CD8-positive, alpha-beta memory T cell (primary cell): ENCODE measurements at regions of chr10 and their contacts with region 1.

Region 1: DNA sequence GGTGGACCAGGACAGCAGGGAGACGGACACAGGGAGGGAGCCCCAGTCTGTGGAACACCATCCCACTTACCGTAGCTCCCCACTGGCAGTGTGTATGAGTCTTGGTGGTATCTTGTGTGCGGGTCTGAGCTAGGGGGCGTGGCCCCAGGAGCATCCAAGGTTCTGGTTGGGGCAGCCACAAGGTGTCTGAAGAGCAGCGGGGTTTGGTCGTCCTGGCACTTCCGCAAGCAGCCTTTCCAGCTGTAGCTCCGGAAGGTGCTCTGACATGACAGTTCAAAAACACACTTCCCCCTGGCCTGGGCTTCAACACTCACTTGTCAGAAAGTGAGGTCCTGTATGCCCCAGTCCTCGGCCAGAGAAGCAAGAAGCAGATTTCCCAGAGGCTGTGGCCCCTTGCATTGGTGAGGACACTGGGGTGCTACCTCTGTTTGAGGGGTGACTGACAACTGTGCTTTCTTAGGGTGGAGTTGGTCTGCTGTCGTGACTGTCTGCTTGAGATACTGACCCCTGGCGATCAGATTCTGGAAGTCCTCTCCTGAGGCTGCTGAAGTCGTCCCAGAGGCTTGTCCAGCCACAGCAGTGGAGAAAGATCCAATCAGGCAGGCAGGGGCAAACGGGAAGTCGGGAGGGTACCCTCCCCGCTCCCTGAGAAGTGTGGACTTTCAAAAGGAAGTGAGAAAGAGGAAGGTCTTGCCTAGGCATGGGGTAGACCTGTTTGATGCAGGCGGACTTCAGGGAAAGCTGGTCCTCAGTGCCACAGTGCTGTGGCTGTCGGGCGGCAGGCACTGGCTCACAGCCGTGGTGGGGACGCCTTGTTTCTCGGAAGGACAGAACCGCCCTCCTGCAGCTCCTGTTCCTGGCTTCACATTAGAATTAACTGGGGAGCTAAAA is 51.4 kb upstream of the PFKFB3 start:
- DNase-seq: peak in 4 of 5 donors; percentile 26 to 59 (median 50)
- H3K4me3 ChIP-seq: peak overlapping the region; percentile 34
- H3K4me3 Mint-ChIP-seq: peak overlapping the region in 6 of 7 donors; percentile 43 to 75 (median 48)
- H3K27ac ChIP-seq: no peak overlapping the region
- H3K27ac Mint-ChIP-seq: peak overlapping the region in 7 of 8 donors; percentile 13 to 89 (median 73)
- H3K4me1 ChIP-seq: peaks cover 25% of the 10 kb centered on the region
- H3K4me1 Mint-ChIP-seq: peaks cover 43 to 60% (median 44%) of the 10 kb centered on the region in 3 donors
- H3K27me3 ChIP-seq: no peaks in the 10 kb centered on the region
- H3K27me3 Mint-ChIP-seq: no peaks in the 10 kb centered on the region

Region 2: DNA sequence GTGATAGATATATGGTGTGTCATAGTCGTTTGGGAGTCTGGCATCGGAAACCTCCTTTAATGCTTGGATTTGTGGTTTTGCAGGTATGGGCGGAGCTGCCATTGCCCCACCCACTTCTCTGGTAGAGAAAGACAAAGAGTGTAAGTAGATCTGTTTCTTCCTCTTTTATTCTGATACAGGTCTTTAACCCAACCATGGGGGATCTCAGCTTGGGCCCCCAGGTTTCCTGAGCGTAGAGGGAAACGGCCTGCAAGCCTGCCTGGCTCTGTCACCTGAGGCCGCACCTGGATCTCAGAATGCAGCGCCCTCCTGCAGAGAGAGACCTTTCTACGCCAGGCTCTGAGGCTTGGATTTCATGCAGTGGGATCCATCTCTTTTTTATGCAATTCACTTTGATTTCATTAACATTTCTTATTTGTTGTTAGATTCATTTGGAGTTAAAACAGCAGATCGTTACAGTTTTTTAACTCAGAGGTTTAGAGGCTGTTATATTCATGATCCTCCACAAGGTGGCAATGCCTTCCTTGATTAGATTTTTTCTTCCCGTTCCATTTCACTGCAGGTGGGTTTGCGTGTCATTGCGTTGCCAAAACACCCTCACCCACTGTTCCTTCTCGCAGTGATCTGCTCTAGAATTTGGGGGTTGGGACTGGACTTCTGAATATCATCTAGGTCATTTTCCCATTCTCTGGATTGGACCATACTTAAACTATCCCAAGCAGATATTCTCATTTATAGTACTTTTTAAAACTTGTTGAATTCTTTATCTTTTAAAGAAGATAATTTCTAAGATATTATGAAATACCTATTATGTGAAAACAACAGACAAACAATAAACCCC is 42.5 kb before region 1 on chr10:
- CTCF ChIA-PET with region 1: interaction called, 22 read pairs
- POLR2A ChIA-PET with region 1: no interaction called
- DNase-seq: peak in 3 of 5 donors; percentile 22 to 54 (median 45)
- H3K4me3 ChIP-seq: no peak overlapping the region
- H3K4me3 Mint-ChIP-seq: peak overlapping the region in 5 of 7 donors; percentile 57 to 73 (median 62)
- H3K27ac ChIP-seq: no peak overlapping the region
- H3K27ac Mint-ChIP-seq: peak overlapping the region; percentile 68 to 94 (median 86)
- H3K4me1 ChIP-seq: peaks cover 10% of the 10 kb centered on the region
- H3K4me1 Mint-ChIP-seq: peaks cover 26 to 43% (median 34%) of the 10 kb centered on the region in 3 donors
- H3K27me3 ChIP-seq: no peaks in the 10 kb centered on the region
- H3K27me3 Mint-ChIP-seq: peaks cover 0 to 1% of the 10 kb centered on the region in 2 donors

Region 3: GRCh38 chr10:6136215-6137201 is 14.8 kb before region 1 on chr10:
- CTCF ChIA-PET with region 1: interaction called, 34 read pairs
- POLR2A ChIA-PET with region 1: interaction called, 3 read pairs
- DNase-seq: no peak
- H3K4me3 ChIP-seq: no peak overlapping the region
- H3K4me3 Mint-ChIP-seq: peak overlapping the region in 2 of 7 donors; percentile 48 to 60
- H3K27ac ChIP-seq: no peak overlapping the region
- H3K27ac Mint-ChIP-seq: peak overlapping the region in 3 of 8 donors; percentile 34 to 89 (median 38)
- H3K4me1 ChIP-seq: peaks cover 13% of the 10 kb centered on the region
- H3K4me1 Mint-ChIP-seq: peaks cover 34 to 48% (median 47%) of the 10 kb centered on the region in 3 donors
- H3K27me3 ChIP-seq: peaks cover 3% of the 10 kb centered on the region
- H3K27me3 Mint-ChIP-seq: peaks cover 5 to 12% of the 10 kb centered on the region in 2 donors

Region 4: GRCh38 chr10:6163364-6164270 is 12.3 kb after region 1 on chr10:
- CTCF ChIA-PET with region 1: interaction called, 11 read pairs
- POLR2A ChIA-PET with region 1: interaction called, 3 read pairs
- DNase-seq: peak; percentile 88 to 93 (median 92)
- H3K4me3 ChIP-seq: peak overlapping the region; percentile 74
- H3K4me3 Mint-ChIP-seq: peak overlapping the region; percentile 85 to 96 (median 92)
- H3K27ac ChIP-seq: peak overlapping the region; percentile 95
- H3K27ac Mint-ChIP-seq: peak overlapping the region; percentile 88 to 99 (median 98)
- H3K4me1 ChIP-seq: peaks cover 24% of the 10 kb centered on the region
- H3K4me1 Mint-ChIP-seq: peaks cover 43 to 52% (median 52%) of the 10 kb centered on the region in 3 donors
- H3K27me3 ChIP-seq: no peaks in the 10 kb centered on the region
- H3K27me3 Mint-ChIP-seq: peaks cover 0 to 1% of the 10 kb centered on the region in 2 donors

Region 5: GRCh38 chr10:6300106-6300783 is 148.9 kb after region 1 on chr10:
- CTCF ChIA-PET with region 1: no interaction called
- POLR2A ChIA-PET with region 1: no interaction called
- DNase-seq: peak in 3 of 5 donors; percentile 53 to 70 (median 57)
- H3K4me3 ChIP-seq: peak overlapping the region; percentile 0
- H3K4me3 Mint-ChIP-seq: peak overlapping the region; percentile 0 to 57 (median 20)
- H3K27ac ChIP-seq: no peak overlapping the region
- H3K27ac Mint-ChIP-seq: peak overlapping the region; percentile 53 to 89 (median 76)
- H3K4me1 ChIP-seq: peaks cover 16% of the 10 kb centered on the region
- H3K4me1 Mint-ChIP-seq: peaks cover 18 to 31% (median 22%) of the 10 kb centered on the region in 3 donors
- H3K27me3 ChIP-seq: no peaks in the 10 kb centered on the region
- H3K27me3 Mint-ChIP-seq: no peaks in the 10 kb centered on the region